ENCODE measurements at regions of chr19 and their contacts with region 1.

Region 1: GRCh38 chr19:46661020-46661731 is at the start of gene DACT3:
- DNase-seq: peak; percentile 99
- H3K4me3 ChIP-seq: peak within 1 kb of the TSS; percentile 50 to 78 (median 60)
- H3K27ac ChIP-seq: peak within 1 kb of the TSS; percentile 62 to 89 (median 87)
- H3K4me1 ChIP-seq: peaks cover 19 to 38% (median 20%) of the 10 kb centered on the region in 3 donors
- H3K27me3 ChIP-seq: peaks cover 3 to 33% (median 8%) of the 10 kb centered on the region in 4 donors
- CTCF ChIP-seq: peak in 2 of 6 experiments; percentile 16 to 34
- POLR2A ChIP-seq: peak in 1 of 4 donors; percentile 43
- total RNA-seq, gene DACT3: 0.22 to 5.7 (median 1.8) TPM

Region 2: GRCh38 chr19:46624958-46625661 is 36.1 kb before region 1 on chr19 and contains the start of gene PTGIR:
- intact Hi-C with region 1: loop called (anchors 5 kb)
- DNase-seq: no peak
- H3K4me3 ChIP-seq: peak within 1 kb of the TSS in 2 of 4 donors; percentile 22 to 48
- H3K27ac ChIP-seq: peak within 1 kb of the TSS; percentile 29 to 93 (median 81)
- H3K4me1 ChIP-seq: peaks cover 23 to 65% (median 34%) of the 10 kb centered on the region in 3 donors
- H3K27me3 ChIP-seq: peaks cover 0 to 16% (median 0%) of the 10 kb centered on the region in 4 donors
- CTCF ChIP-seq: no peak
- POLR2A ChIP-seq: peak in 2 of 4 donors; percentile 10 to 21
- total RNA-seq, gene PTGIR: 0.57 to 3.0 (median 1.1) TPM in 3 of 4 donors, not detected in the other

Region 3: GRCh38 chr19:46697204-46697960 is 36.2 kb after region 1 on chr19:
- intact Hi-C with region 1: no loop called
- DNase-seq: no peak
- H3K4me3 ChIP-seq: peak overlapping the region in 2 of 4 donors; percentile 27 to 40
- H3K27ac ChIP-seq: peak overlapping the region; percentile 16 to 72 (median 53)
- H3K4me1 ChIP-seq: peaks cover 0 to 17% (median 0%) of the 10 kb centered on the region in 3 donors
- H3K27me3 ChIP-seq: no peaks in the 10 kb centered on the region
- CTCF ChIP-seq: no peak
- POLR2A ChIP-seq: no peak

Measured in esophagus squamous epithelium (tissue), 5 donors.